ENCODE measurements at regions of chr11 and their contacts with region 1.

Region 1: DNA sequence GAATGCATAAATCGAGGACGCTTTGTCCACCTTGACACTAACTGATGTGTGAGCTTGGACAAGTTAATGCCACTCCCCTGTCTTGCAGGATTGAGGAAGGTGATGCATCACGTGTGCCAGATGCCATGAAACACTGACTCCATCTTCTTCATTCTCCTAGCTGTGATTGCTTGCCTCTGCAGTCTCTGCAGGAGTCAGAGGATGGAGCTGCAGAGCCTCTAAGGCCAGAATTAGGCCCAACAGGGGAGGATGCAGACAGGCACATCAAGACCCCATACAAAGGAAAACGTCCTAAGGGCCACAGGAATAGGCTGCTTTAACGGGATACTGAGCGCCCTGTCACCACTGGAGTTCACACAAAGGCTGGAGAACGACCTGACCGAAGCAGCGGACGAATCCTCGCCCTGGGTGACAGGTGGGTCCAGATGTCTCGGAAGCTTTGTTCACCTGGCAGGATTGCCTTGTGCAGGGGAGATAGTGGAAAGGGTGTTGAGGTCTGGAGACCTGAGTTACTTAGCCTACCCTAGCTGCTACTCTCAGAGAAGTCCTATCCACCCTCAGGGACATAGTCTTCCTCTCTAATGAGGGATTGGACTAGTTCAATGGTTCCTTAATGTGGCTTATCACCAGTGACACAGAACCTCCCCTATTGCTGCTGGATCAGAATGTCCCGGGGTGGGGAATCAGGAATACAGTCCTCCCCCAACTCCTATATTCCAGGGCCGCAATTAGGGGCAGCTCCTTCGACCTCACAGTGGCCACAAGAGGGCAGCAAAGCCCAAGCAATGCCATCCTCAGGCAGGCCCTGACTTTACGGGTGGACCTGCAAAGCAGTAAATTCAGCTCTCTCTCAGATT is 32.4 kb downstream of the DBX1 start:
- DNase-seq: no peak
- H3K4me3 ChIP-seq: no peak overlapping the region
- CTCF ChIP-seq: peak; percentile 86

Region 2: DNA sequence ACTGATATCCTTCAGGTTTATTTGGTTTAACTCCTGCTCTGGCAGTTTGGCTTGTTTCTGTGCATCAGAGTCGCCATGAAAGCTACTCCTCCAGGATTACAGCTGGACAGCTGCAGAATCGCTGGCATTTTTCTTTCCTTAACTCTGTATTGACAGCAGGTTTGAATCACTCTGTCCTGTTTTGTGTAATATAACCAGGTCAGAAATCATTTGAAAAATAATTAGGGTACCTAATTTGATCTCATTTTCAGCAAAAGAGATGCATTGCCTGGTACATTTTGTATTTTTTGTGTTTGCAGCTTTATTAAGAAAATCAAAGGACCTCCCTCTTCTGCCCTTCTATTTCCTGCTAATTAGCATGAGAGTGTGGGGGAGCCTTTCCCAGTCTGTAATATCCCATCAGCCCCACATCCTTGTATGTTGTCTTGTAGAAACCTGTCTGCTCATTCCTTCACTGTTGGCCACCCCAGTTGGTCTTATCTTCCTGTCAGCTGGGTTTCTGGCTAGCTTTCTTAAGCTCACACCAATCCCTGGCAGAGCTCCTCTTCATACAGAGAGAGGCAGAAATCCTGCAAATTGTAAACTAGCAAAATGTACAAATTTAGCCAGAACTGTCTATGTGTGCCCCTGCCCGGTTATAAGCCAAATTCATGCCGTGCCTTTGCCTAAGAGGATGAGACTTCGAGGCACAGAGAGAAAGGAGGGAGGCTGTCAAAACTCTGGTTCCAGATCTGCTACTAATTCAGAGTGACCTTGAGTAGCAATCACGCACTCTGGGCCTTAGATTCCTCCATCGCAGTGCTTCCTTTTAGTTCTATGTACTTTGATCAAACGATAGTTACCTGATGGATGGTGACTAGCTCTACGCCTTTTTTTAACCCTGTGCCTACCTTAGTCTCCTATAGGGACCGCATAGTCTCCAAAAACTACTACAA is 214.7 kb before region 1 on chr11:
- CTCF ChIA-PET with region 1: interaction called, 138 read pairs
- POLR2A ChIA-PET with region 1: no interaction called
- DNase-seq: no peak
- H3K4me3 ChIP-seq: no peak overlapping the region
- CTCF ChIP-seq: no peak

Region 3: DNA sequence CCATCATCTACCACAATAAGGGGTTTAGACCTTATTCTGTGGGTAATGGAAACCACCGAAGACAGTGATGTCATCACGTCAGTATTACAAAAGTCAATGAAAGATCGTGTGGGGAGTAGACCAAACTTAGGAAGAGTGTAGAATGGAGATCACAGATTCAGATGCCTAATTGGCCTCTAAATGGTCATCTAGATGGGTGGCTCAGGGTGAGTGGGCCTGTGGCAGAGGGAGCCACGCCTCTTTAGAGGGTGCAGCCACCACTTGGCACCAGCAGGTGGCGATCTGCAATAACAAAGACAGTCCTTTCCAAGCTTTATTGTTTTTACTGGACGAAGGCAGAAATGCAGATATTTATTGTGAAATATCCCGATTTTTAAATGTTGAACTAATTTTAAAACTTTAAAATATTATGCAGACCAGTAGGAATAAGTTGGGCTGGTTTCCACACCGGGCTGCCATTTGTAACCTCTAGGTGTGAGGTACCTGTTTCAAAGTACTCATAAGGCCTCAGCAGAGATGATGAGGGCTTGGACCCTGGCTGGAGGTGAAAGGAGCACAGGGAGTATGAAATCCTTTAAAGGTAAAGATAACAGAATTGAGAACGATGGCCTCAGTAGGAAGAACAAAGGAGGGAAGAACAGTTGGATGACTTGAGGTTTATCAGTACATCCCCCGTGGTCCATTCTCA is 189.6 kb before region 1 on chr11:
- CTCF ChIA-PET with region 1: interaction called, 52 read pairs
- POLR2A ChIA-PET with region 1: interaction called, 3 read pairs
- DNase-seq: no peak
- H3K4me3 ChIP-seq: no peak overlapping the region
- CTCF ChIP-seq: peak; percentile 65

Region 4: DNA sequence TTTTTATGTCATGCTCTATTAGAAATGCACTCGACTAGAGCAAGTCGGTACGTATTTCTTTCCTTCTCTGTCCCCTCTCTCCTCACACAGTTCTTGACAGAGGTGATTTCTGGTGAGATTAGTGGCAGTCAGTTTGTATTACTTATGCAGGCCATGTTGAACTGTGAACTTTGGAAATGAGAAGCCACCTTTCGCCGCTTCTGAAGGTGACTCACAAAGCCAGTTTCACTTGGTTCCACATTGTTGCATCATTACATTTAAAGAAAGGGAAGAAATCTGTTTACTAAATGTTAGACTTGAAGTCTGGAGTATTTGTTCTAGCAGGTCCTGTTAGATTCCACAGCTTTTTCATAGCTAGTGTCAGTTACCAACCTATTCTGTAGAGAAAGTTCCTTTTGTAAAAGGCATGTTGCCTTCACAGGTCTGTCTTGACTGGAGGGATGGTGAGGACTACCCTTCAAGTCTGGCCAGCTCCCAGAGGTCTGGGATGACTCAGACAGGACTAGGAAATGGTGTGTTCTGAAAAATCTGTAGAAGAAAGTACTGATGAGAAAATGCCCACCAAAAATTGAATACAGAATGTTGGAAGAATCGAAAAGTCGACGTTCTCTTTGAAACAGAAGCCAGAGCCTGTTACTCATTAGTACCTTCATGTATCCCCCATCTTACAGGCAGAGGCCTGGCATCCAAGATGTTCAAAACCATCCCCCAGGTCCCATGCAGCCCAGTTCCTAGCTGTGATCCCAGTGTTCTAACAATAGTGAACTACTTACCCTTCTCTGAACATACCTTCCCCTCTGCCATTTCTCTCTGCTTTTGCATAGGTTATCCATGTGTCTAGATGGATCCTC is 149.0 kb before region 1 on chr11:
- CTCF ChIA-PET with region 1: interaction called, 17 read pairs
- POLR2A ChIA-PET with region 1: no interaction called
- DNase-seq: peak; percentile 52
- H3K4me3 ChIP-seq: no peak overlapping the region
- CTCF ChIP-seq: no peak

Region 5: DNA sequence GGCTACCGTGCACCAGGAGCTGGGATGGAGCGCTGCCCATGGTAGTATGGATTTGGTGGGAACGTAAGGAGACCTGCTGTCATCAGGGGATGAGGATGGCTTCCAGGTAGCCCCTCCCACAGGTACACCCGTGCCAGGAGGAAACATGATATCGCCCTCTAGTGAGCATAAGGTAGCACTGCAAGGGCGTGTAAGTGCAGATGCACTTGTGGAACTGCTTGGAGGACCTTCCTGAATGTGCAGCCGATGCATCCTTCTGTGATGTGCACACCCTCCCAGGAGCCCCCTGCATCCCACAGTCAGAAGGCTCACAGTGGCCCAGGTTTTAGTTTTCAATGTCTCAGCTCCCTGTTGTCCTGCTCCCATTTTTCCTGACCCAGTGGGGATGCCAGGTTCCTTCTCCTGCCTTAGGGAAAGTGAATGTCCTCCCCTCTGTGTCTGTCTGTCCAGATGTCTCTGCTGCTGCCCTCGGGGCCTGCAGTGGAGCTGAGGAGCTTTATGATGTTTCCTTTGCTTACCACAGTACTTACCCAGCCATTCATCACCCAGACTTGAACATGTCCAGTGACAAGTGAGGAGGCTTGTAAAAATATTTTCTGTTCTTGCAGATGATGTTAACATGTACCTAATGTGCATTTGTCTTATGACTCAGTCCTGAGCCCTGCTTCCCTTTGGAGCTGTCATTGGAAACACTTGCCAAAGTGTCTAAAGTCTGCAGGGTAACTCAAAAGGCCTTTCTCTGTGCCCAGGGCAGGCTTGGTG is 16.8 kb before region 1 on chr11:
- CTCF ChIA-PET with region 1: interaction called, 135 read pairs
- POLR2A ChIA-PET with region 1: no interaction called
- DNase-seq: peak; percentile 83
- H3K4me3 ChIP-seq: no peak overlapping the region
- CTCF ChIP-seq: peak; percentile 85

Region 6: GRCh38 chr11:20261526-20261925 is 133.6 kb after region 1 on chr11:
- CTCF ChIA-PET with region 1: no interaction called
- POLR2A ChIA-PET with region 1: no interaction called
- DNase-seq: no peak
- H3K4me3 ChIP-seq: no peak overlapping the region
- CTCF ChIP-seq: no peak

Region 7: DNA sequence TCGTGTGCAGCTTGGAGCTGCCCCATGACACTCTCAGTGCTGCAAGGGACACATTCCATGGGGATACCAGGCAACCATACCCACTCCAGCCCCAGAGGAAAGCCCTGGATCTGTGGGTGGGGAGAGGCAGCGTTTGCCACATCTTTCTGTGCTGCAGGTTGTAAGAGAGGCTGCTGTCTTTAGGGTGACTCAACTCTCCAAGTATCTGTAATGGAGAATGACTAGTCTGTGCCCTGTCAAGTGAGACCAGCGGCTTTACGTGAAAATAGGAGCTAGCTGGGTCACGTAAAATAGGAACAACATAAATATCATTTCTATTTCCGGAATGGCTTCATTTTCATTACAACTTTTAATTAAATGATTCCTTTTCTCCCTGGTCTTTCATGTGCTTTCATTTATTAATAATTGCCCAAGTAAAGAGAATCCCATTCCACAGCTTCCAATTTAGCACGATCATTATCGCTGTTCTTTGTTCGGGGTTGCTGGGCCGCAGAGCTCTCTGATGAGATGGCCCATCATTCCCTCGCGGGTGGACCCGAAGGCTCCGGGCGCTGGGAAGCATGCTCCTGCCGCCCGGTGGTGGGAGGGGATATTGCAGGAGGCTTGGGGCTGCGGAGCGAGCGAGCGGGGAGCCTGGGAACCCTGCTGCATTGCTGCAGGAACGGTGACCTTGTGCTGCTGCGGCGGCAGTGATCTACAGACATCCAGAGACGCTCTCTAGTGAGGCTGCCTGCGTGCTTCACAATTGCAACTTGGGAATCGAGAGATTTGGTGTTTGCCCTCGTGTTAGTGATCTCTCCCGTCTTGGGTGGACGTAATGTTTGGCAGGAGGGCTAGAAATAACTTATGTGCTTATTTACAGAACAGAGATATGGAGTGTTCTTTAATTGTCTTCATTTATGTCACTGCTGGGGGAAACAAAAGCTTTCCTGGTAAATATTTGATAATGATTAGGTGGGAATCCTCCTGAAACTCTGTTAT is 482.1 kb after region 1 on chr11:
- CTCF ChIA-PET with region 1: interaction called, 25 read pairs
- POLR2A ChIA-PET with region 1: no interaction called
- DNase-seq: no peak
- H3K4me3 ChIP-seq: peak overlapping the region; percentile 18; the same call in 1 of the 2 replicates
- CTCF ChIP-seq: peak; percentile 97

Measured in AG04449 (cell line).